PC-9 (cell line): ENCODE measurements at regions of chr12 and their contacts with region 1.

Region 1: GRCh38 chr12:49819786-49820185 is 8.4 kb downstream of the NCKAP5L start:
- DNase-seq: no peak
- H3K4me3 ChIP-seq: no peak overlapping the region
- H3K27ac ChIP-seq: no peak overlapping the region
- H3K4me1 ChIP-seq: no peaks in the 10 kb centered on the region; the same call in 1 of the 2 replicates
- H3K27me3 ChIP-seq: no peaks in the 10 kb centered on the region
- CTCF ChIP-seq: no peak

Region 2: GRCh38 chr12:49808686-49809380 is 11.0 kb before region 1 on chr12:
- CTCF ChIA-PET with region 1: interaction called, 3 read pairs
- POLR2A ChIA-PET with region 1: interaction called, 18 read pairs
- intact Hi-C with region 1: no loop called
- DNase-seq: no peak
- H3K4me3 ChIP-seq: no peak overlapping the region
- H3K27ac ChIP-seq: no peak overlapping the region
- H3K4me1 ChIP-seq: no peaks in the 10 kb centered on the region
- H3K27me3 ChIP-seq: no peaks in the 10 kb centered on the region
- CTCF ChIP-seq: no peak

Region 3: DNA sequence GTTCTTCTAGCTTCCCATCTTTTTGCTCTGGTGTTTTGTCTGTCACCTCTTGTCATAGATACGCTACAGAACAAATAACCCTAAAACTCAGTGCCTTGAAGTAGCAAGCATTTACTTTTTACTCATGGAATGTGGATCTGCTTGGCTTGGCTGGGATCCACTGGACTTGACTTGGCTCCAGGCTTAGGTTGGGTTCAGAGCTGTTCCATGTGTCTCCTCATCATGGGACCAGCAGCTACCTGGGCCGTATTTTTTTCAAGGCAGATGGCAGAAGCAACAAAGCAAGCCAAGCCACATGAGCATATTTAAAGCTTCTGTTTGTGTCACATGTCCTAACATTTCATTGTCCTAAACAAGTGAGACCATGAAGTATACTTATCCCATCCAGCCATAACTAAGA is 895.4 kb after region 1 on chr12:
- CTCF ChIA-PET with region 1: no interaction called
- POLR2A ChIA-PET with region 1: interaction called, 20 read pairs
- intact Hi-C with region 1: no loop called
- DNase-seq: no peak
- H3K4me3 ChIP-seq: no peak overlapping the region
- H3K27ac ChIP-seq: no peak overlapping the region
- H3K4me1 ChIP-seq: no peaks in the 10 kb centered on the region
- H3K27me3 ChIP-seq: no peaks in the 10 kb centered on the region
- CTCF ChIP-seq: no peak